Endothelial cell of umbilical vein (primary cell): ENCODE measurements at regions of chr9 and their contacts with region 1.

Region 1: DNA sequence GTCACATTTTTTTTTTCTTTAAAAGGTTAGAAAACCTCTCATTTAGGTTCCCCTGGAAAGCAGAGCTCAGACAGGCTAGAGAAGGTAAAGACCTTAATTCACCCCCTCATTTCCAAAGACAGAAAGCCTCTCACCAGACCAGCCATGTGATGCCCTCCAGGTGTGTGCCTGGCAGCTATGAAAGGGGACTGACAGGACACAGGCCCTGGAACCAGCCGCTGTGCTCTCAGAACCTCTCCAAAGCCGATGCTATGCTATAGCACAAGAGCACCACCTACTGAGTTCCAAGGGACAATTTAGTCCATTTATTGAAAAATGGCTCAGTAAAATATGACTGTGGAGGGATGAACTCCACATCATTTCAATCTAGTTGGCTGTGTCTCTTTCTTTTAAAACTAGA is 48.8 kb downstream of the FANCC start:
- DNase-seq: peak; percentile 47
- H3K4me3 ChIP-seq: no peak overlapping the region
- H3K27ac ChIP-seq: no peak overlapping the region
- H3K4me1 ChIP-seq: no peaks in the 10 kb centered on the region
- H3K27me3 ChIP-seq: no peaks in the 10 kb centered on the region
- CTCF ChIP-seq: peak; percentile 12 to 37
- POLR2A ChIP-seq: no peak

Region 2: DNA sequence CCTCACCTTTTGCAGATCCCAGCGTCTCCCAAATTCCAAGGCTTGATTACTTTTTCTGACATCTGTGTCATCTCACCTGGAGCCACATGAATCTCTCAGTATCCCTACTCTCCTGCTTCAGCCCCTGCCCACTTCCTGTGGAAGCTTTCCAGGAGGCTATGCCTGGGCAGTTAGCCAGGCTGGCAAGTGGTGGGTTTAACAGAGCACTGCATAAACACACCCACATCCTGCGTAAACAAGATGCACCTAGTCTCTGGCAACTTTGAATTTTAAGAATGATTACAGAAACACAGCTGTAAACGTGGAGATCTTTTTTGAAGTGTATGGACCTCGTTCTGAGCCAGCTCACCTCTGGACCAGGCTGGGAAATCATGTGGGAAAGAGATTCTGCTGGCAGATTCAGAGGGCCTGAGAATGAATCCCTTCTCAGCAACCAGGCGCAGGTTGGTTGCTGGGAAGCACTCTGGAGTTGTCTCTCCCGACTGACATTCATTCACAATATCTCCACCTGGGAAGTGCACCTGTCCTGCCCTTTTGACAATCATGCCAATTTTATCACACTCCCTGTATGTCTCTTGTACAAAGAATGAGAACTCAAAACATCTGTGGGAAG is 104.5 kb after region 1 on chr9:
- CTCF ChIA-PET with region 1: no interaction called
- POLR2A ChIA-PET with region 1: no interaction called
- dilution Hi-C with region 1: no loop called
- intact Hi-C with region 1: loop called (anchors 5 kb)
- DNase-seq: no peak
- H3K4me3 ChIP-seq: no peak overlapping the region
- H3K27ac ChIP-seq: no peak overlapping the region
- H3K4me1 ChIP-seq: no peaks in the 10 kb centered on the region
- H3K27me3 ChIP-seq: peaks cover 4 to 6% of the 10 kb centered on the region in 2 experiments
- CTCF ChIP-seq: no peak
- POLR2A ChIP-seq: no peak